HCT116 (cell line): ENCODE measurements at regions of chr15 and their contacts with region 1.

Region 1: DNA sequence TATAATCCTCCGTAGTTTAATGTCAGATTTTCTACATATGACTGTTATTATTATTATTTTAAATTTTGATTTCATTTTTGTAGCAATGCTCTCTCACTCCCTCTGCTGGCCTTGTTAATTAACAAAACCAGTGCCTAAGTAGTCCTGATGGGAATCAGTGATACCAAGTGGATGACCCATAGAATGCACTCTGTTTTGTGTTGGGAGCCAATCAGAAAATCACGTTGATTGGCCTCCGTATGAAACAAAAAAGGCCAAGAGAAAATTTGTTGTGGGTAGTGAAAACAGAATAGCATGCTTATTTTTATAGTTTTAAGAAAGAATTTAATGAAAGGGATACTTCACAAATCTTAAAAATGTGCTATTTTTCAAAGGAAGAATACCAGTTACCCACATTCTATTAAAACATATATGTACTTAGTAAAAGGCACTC is 34.4 kb upstream of the MEIS2 start:
- DNase-seq: peak; percentile 54
- ATAC-seq: peak; percentile 91
- H3K4me3 ChIP-seq: no peak overlapping the region
- H3K27ac ChIP-seq: no peak overlapping the region
- H3K4me1 ChIP-seq: no peaks in the 10 kb centered on the region
- H3K27me3 ChIP-seq: no peaks in the 10 kb centered on the region
- CTCF ChIP-seq: peak; percentile 59 to 63 (median 61); a peak in 5 of 6 replicates
- POLR2A ChIP-seq: no peak
- RAD21 ChIP-seq: peak; percentile 35; the same call in 1 of the 2 replicates

Region 2: DNA sequence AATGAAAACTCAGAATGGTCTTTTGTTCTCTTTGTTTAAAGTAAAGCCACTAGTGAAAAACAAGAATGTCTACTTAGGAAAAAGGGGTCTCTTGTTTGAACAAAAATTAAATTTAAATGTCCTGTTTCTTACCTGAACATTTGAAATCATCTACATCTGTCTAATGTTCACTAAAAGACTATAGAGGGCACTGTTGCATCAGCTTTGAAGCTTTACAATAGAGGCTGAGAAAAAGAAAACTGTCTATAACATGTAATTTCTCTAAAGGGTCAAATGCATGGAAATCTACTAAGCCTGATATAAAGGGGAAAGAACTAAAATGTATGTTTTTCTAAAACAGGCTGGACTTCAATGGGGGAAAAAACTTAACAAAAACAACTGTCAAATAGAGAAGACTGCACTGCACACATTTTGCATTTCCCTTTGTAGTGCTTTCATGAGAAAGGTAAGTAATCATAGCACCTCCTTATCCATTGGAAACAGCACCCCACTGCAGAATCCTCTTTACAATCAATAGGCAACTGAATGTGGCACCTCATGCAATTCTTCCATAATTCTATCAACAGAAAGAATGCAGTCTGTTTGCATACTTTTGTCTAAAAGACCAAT is 1615.1 kb before region 1 on chr15:
- CTCF ChIA-PET with region 1: interaction called, 3 read pairs
- POLR2A ChIA-PET with region 1: no interaction called
- RAD21 ChIA-PET with region 1: no interaction called
- intact Hi-C with region 1: loop called (anchors 1 kb)
- DNase-seq: peak; percentile 28
- ATAC-seq: peak; percentile 75; the same call in 1 of the 2 replicates
- H3K4me3 ChIP-seq: no peak overlapping the region
- H3K27ac ChIP-seq: no peak overlapping the region
- H3K4me1 ChIP-seq: peaks cover 0 to 2% of the 10 kb centered on the region in 2 experiments; a peak in 1 of 4 replicates
- H3K27me3 ChIP-seq: no peaks in the 10 kb centered on the region
- CTCF ChIP-seq: peak; percentile 27 to 77 (median 46); a peak in 5 of 6 replicates
- POLR2A ChIP-seq: no peak
- RAD21 ChIP-seq: peak; percentile 68

Region 3: DNA sequence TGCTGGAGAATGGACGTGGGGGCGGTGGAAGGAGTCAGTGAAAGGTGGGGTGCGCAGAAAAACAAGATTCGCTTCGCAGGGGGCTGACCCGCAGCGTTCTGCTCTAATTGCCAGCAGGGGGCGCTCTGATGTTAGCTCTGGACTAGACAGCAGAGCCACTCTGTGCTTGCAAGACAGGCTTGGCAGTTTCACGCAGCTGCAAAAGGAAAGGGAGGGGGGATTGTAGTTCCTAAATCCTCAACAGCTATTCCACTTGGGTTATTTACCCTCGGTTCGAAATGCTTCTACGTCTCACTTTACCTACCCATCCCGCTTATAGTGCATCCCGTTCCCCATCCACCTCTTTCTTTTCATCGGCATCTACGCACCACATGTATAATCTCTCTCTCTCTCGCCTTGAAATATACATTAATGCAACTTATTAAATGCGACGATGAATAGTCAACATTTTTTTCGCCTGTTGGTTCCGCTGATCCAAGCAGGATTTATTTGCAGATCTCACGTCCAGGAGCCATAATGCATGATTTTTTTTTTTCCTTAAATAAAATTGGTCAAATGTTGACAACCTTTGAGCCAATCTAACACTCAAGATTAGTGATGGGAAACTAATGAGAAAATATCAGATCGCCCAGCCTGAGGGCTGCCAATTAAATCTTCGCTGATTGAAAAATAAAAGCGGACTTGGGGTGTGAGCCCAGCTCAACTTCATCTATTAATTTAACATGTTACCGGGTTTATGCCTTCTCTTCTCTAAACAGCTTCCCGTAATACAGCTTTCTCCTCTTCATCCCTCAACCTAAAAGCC is 250.8 kb before region 1 on chr15:
- CTCF ChIA-PET with region 1: interaction called, 27 read pairs
- POLR2A ChIA-PET with region 1: no interaction called
- RAD21 ChIA-PET with region 1: interaction called in 1 of 2 experiments, 4 read pairs
- intact Hi-C with region 1: loop called (anchors 1 kb)
- DNase-seq: peak; percentile 63
- ATAC-seq: peak; percentile 99
- H3K4me3 ChIP-seq: no peak overlapping the region
- H3K27ac ChIP-seq: no peak overlapping the region
- H3K4me1 ChIP-seq: no peaks in the 10 kb centered on the region
- H3K27me3 ChIP-seq: no peaks in the 10 kb centered on the region
- CTCF ChIP-seq: peak; percentile 57 to 85 (median 85); a peak in 5 of 6 replicates
- POLR2A ChIP-seq: no peak
- RAD21 ChIP-seq: peak; percentile 82

Region 4: GRCh38 chr15:36925653-36926426 is 208.9 kb before region 1 on chr15:
- CTCF ChIA-PET with region 1: no interaction called
- POLR2A ChIA-PET with region 1: no interaction called
- RAD21 ChIA-PET with region 1: no interaction called
- intact Hi-C with region 1: no loop called
- DNase-seq: no peak
- ATAC-seq: no peak
- H3K4me3 ChIP-seq: no peak overlapping the region
- H3K27ac ChIP-seq: no peak overlapping the region
- H3K4me1 ChIP-seq: no peaks in the 10 kb centered on the region
- H3K27me3 ChIP-seq: no peaks in the 10 kb centered on the region
- CTCF ChIP-seq: no peak
- POLR2A ChIP-seq: no peak
- RAD21 ChIP-seq: no peak

Region 5: DNA sequence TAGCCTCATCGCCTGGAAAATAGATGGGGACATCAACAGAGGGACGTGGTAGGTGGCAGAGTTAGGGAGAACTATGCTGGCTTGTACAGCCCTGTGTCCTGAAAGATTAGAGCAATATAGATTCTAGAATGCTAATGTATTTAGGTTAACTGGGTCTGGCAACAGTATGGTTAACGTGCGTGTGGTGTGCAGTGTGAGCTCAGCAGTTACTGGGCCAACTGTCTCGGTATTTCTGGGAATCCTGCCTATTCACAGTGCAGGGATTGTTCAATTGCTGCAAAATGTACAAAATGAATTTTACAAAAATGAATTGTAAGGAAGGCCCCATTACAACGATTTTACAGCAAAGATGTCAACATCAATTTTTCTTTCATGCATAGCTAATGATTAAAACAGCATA is 55.0 kb before region 1 on chr15:
- CTCF ChIA-PET with region 1: no interaction called
- POLR2A ChIA-PET with region 1: no interaction called
- RAD21 ChIA-PET with region 1: no interaction called
- intact Hi-C with region 1: no loop called
- DNase-seq: no peak
- ATAC-seq: no peak
- H3K4me3 ChIP-seq: no peak overlapping the region
- H3K27ac ChIP-seq: no peak overlapping the region
- H3K4me1 ChIP-seq: no peaks in the 10 kb centered on the region
- H3K27me3 ChIP-seq: no peaks in the 10 kb centered on the region
- CTCF ChIP-seq: no peak
- POLR2A ChIP-seq: no peak
- RAD21 ChIP-seq: no peak

Region 6: GRCh38 chr15:37117030-37117429 is 17.7 kb before region 1 on chr15:
- CTCF ChIA-PET with region 1: no interaction called
- POLR2A ChIA-PET with region 1: no interaction called
- RAD21 ChIA-PET with region 1: no interaction called
- intact Hi-C with region 1: no loop called
- DNase-seq: no peak
- ATAC-seq: no peak
- H3K4me3 ChIP-seq: no peak overlapping the region
- H3K27ac ChIP-seq: no peak overlapping the region
- H3K4me1 ChIP-seq: no peaks in the 10 kb centered on the region
- H3K27me3 ChIP-seq: no peaks in the 10 kb centered on the region
- CTCF ChIP-seq: no peak
- POLR2A ChIP-seq: no peak
- RAD21 ChIP-seq: no peak